ENCODE measurements at regions of chr5 and their contacts with region 1.

Region 1: DNA sequence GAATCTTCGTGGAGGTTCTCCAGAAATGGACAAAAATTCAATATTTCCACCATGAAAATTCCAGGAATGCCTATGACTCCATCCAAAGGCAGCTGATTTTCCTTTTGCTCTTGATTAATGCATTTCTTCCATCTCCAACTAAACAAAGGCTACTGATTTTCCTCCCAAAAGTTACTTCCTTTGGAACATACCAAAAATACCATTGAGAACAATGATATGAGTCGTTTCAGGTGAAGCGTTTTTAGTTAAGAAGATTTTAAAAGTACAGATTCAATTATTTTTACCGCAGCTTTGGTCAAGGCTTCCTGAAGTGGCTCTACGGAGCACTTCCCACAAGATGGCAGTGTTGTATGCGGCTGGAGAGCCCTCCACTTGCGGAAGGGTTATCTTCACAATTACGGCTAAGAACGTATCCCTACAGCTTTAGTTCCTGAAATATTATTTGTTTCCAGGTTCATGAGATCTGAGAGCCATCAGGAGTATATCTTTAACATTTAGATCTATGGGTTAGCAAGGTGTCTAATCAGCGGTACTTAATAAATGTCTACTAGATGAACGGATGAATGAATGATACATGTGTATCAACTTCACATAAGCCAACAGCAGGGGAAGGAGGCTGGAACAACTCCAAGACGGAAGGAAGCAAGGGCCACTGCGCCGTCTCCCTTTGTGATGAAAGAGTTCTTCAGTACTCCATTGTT is 35.9 kb upstream of the ARSB start:
- DNase-seq: peak; percentile 44 to 53
- ATAC-seq: peak; percentile 87

Region 2: GRCh38 chr5:78803353-78803752 is 217.7 kb before region 1 on chr5:
- intact Hi-C with region 1: no loop called
- DNase-seq: peak; percentile 29 to 71
- ATAC-seq: peak; percentile 25

Region 3: GRCh38 chr5:79396265-79396664 is 375.3 kb after region 1 on chr5:
- intact Hi-C with region 1: no loop called
- DNase-seq: no peak
- ATAC-seq: no peak

Region 4: DNA sequence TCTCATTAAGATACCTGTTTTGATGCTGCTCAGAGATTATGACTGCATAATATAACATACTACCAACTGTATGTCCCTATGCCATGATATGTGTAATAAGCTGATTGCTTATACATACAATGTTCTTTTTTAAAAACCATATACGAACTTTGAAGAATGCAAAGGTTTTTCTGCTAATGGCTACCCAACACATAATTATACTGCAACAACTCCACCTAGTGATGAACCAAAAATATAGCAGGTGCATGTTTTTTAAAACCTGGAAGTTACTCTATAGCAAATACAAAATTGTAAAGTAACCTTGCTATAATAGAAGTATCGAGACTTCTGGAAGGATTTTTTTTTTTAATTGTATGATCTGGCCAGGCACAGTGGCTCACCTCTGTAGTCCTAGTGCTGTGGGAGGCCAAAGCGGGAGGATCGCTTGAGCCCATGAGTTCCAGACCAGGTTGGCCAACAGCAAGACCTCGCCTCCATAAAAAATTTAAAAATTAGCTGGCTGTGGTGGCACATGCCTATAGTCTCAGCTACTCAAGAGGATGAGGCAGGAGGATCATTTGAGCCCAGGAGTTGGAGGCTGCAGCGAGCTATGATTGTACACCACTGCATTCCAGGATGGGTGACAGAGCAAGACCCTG is 443.8 kb after region 1 on chr5:
- intact Hi-C with region 1: loop called in 1 of 2 experiments (anchors 5 kb)
- DNase-seq: no peak
- ATAC-seq: peak; percentile 46

Region 5: DNA sequence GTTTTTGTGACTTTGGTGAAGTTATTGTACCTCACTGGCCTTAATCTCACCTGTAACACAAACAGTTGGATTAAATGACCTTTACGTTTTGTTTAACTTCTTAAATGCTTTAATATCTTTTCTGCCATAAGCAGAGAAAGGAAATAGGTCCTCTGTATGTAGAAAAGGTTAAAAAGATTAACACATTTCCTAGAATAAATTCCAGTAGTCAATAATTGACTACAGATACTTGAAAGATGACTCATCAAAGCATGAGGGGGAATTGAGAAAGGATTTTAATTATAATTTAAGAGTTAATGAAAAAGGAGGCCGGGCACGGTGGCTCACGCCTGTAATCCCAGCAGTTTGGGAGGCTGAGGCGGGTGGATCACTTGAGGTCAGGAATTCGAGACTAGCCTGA is 632.8 kb after region 1 on chr5:
- intact Hi-C with region 1: no loop called
- DNase-seq: no peak
- ATAC-seq: no peak